ENCODE measurements at regions of chr6 and their contacts with region 1.

Region 1: GRCh38 chr6:150767571-150768018 is 97.9 kb upstream of the MTHFD1L start:
- DNase-seq: peak in 1 of 2 experiments; percentile 11
- H3K4me3 ChIP-seq: no peak overlapping the region
- H3K4me3 Mint-ChIP-seq: peak overlapping the region; percentile 35
- H3K27ac Mint-ChIP-seq: peak overlapping the region; percentile 10
- H3K4me1 ChIP-seq: peaks cover 4% of the 10 kb centered on the region; the same call in 1 of the 2 replicates
- H3K4me1 Mint-ChIP-seq: peaks cover 13% of the 10 kb centered on the region
- H3K27me3 ChIP-seq: no peaks in the 10 kb centered on the region
- H3K27me3 Mint-ChIP-seq: no peaks in the 10 kb centered on the region
- CTCF ChIP-seq: no peak

Region 2: GRCh38 chr6:150800674-150801314 is 33.2 kb after region 1 on chr6:
- CTCF ChIA-PET with region 1: no interaction called
- POLR2A ChIA-PET with region 1: no interaction called
- intact Hi-C with region 1: loop called (anchors 5 kb)
- DNase-seq: no peak
- H3K4me3 ChIP-seq: no peak overlapping the region
- H3K4me3 Mint-ChIP-seq: no peak overlapping the region
- H3K27ac Mint-ChIP-seq: no peak overlapping the region
- H3K4me1 ChIP-seq: no peaks in the 10 kb centered on the region
- H3K4me1 Mint-ChIP-seq: no peaks in the 10 kb centered on the region
- H3K27me3 ChIP-seq: no peaks in the 10 kb centered on the region
- H3K27me3 Mint-ChIP-seq: no peaks in the 10 kb centered on the region
- CTCF ChIP-seq: no peak

Measured in Caco-2 (cell line).